WTC11 (cell line): ENCODE measurements at regions of chr1 and their contacts with region 1.

Region 1: DNA sequence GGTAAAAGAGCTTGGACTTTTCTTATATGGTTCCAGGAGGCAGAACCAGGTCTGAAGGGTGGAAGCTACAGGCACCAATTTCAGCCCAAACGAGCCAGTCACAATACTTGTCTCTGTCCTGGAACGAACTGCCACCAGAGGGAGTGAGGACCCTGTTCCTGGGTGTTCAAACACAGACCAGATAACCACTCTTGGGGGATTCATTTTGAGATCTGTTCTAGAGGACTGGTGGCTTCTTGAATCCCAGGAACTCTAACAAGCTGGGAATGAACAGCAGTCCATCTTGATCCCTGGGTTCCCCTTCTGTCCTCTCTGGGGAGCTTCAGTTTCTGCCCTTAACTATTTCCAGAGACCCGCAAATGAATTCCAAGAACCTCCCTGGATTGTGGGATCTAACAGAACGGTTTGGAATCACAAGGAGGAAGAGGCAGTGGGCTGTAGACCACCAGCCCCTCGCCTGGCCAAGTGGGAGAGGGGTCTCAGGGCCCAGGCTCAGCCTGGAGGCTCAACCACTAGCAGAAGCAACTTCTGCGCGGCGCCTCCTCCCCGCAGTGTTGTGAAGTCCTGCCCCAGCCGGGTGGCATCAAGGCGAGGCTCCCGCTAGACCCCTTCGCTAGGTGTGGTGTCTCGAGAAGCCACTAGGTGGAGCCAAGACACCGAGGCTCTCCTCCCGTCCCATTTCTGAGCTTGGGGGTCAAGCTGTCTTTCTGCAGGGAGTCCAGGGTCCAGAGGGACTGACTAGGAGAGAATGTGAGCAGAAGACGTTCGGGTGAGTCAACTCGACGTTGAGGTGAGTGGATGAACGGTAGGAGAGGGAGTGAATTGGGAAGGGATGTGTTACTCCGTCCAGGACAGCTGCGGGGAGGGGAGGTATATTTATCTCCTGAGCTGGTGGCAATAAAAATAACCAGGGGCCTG is 12.1 kb upstream of the NES start:
- DNase-seq: peak; percentile 90
- ATAC-seq: peak; percentile 51
- H3K4me3 Mint-ChIP-seq: peak overlapping the region; percentile 74
- H3K27ac Mint-ChIP-seq: peak overlapping the region; percentile 25; the same call in 1 of the 2 replicates
- H3K4me1 Mint-ChIP-seq: peaks cover 57% of the 10 kb centered on the region
- H3K27me3 Mint-ChIP-seq: peaks cover 7% of the 10 kb centered on the region; the same call in 1 of the 2 replicates
- CTCF ChIP-seq: peak; percentile 87

Region 2: GRCh38 chr1:156581661-156582387 is 107.5 kb before region 1 on chr1:
- CTCF ChIA-PET with region 1: no interaction called
- POLR2A ChIA-PET with region 1: no interaction called
- DNase-seq: no peak
- ATAC-seq: no peak
- H3K4me3 Mint-ChIP-seq: no peak overlapping the region
- H3K27ac Mint-ChIP-seq: no peak overlapping the region
- H3K4me1 Mint-ChIP-seq: peaks cover 20% of the 10 kb centered on the region
- H3K27me3 Mint-ChIP-seq: peaks cover 2% of the 10 kb centered on the region
- CTCF ChIP-seq: no peak

Region 3: DNA sequence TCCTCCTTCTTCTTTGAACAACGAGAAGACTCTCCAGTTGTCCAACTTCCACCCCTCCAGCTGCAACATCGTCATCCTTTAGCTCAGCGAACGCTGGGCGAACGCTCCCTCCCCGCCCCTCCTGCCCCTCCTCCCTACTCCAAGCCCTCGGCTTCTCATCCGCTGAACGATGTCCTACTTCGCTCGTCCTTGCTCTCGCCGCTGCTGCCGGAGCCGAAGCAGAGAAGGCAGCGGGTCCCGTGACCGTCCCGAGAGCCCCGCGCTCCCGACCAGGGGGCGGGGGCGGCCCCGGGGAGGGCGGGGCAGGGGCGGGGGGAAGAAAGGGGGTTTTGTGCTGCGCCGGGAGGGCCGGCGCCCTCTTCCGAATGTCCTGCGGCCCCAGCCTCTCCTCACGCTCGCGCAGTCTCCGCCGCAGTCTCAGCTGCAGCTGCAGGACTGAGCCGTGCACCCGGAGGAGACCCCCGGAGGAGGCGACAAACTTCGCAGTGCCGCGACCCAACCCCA is 47.5 kb before region 1 on chr1 and contains the start of gene BCAN:
- CTCF ChIA-PET with region 1: interaction called, 26 read pairs
- POLR2A ChIA-PET with region 1: no interaction called
- DNase-seq: peak; percentile 73
- ATAC-seq: peak; percentile 70
- H3K4me3 Mint-ChIP-seq: peak within 1 kb of the TSS; percentile 70
- H3K27ac Mint-ChIP-seq: no peak within 1 kb of the TSS
- H3K4me1 Mint-ChIP-seq: peaks cover 29% of the 10 kb centered on the region
- H3K27me3 Mint-ChIP-seq: peaks cover 92% of the 10 kb centered on the region
- CTCF ChIP-seq: no peak
- total RNA-seq, gene BCAN: 2.5 to 3.7 TPM (median 3.6 TPM) in 3 replicates

Region 4: GRCh38 chr1:156705918-156706656 is 16.8 kb after region 1 on chr1:
- CTCF ChIA-PET with region 1: interaction called, 1,553 read pairs
- POLR2A ChIA-PET with region 1: interaction called, 195 read pairs
- DNase-seq: peak; percentile 94
- ATAC-seq: peak; percentile 45
- H3K4me3 Mint-ChIP-seq: peak overlapping the region; percentile 84
- H3K27ac Mint-ChIP-seq: peak overlapping the region; percentile 96
- H3K4me1 Mint-ChIP-seq: peaks cover 62% of the 10 kb centered on the region
- H3K27me3 Mint-ChIP-seq: peaks cover 23% of the 10 kb centered on the region
- CTCF ChIP-seq: peak; percentile 96

Region 5: DNA sequence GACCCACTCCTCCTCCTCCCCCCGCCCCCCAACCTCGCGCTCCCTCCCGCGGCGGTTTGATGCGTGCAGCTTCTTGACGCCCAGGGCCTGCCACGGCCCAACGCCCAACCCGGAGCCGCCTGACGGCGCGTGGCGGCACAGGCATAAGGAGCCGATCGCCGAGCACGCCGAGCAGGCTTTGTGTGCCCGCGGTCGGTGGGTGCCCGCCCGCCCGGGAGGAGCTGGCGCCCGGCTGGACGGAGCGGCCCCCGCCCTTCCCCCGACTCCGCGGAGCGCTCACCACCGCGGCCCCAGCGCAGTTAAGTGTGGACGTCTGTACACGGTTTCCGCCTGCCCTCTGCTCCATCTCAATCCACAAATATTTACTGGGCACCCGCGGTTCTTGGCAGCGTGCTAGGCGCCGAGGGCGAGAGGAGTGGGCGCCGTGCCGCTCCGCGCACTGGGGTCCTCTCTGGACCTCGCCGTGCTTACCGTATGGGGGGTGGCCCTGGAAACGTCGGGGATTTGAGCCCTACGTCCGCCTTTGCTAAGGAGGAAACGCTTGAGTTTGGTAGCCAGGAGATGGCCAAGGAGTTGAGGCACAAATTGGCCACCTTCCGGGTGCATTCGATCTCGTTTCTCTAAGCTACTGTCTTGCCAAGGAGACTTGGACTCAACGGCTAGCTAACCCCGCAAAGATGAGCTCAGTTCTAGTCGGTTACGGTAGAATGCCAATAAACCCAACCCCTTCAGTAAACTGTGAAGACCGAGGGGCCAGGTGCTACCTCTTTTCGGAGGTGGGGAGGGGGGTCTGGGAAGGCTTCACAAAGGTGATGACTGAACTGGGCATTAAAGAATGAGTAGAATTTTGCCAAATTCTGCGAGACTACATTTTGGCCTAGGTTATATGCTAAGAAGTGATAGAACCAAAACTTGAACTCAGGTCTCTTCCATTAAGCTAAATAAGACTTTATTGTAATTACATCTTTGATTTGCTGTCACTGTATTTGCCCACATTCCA is 62.8 kb after region 1 on chr1:
- CTCF ChIA-PET with region 1: interaction called, 38 read pairs
- POLR2A ChIA-PET with region 1: interaction called, 16 read pairs
- DNase-seq: peak; percentile 97
- ATAC-seq: peak; percentile 67
- H3K4me3 Mint-ChIP-seq: peak overlapping the region; percentile 96
- H3K27ac Mint-ChIP-seq: peak overlapping the region; percentile 97
- H3K4me1 Mint-ChIP-seq: peaks cover 43% of the 10 kb centered on the region
- H3K27me3 Mint-ChIP-seq: no peaks in the 10 kb centered on the region
- CTCF ChIP-seq: no peak

Region 6: DNA sequence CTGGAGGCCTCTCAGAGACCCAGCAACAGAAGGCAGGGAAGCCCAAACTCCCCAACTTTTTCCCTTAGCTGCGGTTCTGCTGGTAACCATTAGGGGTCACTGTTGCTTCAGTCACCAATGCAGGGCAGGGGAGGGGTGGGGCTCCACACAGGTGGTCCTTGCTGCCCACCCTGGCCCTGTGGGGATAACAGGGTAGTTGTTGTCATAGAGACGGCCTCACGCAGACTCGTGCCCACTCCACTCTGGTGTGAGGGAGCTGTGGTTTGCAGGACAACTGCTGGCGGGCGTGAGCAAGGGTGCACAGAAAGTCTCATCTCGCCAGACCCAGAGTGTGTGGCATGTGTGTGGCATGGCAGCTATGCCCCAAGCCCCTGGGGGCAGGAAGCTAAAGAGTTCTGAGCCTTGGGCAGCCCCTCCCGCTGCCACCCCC is 149.7 kb after region 1 on chr1:
- CTCF ChIA-PET with region 1: interaction called, 20 read pairs
- POLR2A ChIA-PET with region 1: no interaction called
- DNase-seq: peak; percentile 67
- ATAC-seq: peak; percentile 83
- H3K4me3 Mint-ChIP-seq: no peak overlapping the region
- H3K27ac Mint-ChIP-seq: no peak overlapping the region
- H3K4me1 Mint-ChIP-seq: peaks cover 5% of the 10 kb centered on the region
- H3K27me3 Mint-ChIP-seq: peaks cover 61% of the 10 kb centered on the region
- CTCF ChIP-seq: peak; percentile 87

Region 7: DNA sequence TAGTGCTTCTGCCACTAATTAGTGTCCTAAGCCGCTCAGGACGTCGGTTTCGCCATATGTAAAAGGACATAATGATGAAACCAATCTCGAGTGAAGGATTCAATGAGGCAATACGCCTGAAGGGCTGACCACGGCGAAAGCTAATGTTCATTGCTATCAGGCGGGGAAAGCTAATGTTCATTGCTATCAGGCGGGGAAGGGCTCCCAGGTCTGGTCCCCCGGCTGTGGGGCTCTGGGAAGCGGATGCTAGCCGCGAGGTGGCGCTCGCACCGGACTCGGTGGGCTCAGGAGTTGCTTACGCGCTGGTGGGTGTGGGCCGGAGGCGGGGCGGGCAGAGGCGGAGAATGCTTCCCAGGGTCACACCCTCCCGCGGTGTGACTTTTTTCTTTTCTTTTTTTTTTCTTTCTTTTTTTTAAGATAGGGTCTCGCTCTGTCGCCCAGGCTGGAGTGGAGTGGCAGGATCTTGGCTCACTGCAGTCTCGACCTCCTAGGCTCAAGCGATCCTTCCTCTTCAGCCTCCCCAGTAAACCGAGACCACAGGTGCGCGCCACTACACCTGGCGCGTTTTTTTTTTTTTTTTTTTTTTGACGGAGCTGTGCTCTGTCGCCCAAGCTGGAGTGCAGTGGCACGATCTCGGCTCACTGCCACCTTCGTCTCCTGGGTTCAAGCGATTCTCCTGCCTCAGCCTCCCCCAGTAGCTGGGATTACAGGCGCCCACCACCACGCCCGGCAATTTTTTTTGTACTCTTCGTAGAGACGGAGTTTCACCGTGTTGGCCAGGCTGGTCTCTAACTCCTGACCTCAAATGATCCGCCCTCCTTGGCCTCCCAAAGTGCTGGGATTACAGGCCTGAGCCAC is 203.1 kb after region 1 on chr1:
- CTCF ChIA-PET with region 1: interaction called, 116 read pairs
- POLR2A ChIA-PET with region 1: no interaction called
- DNase-seq: peak; percentile 96
- ATAC-seq: peak; percentile 78
- H3K4me3 Mint-ChIP-seq: peak overlapping the region; percentile 72
- H3K27ac Mint-ChIP-seq: no peak overlapping the region
- H3K4me1 Mint-ChIP-seq: peaks cover 24% of the 10 kb centered on the region
- H3K27me3 Mint-ChIP-seq: peaks cover 76% of the 10 kb centered on the region
- CTCF ChIP-seq: peak; percentile 72

Region 8: DNA sequence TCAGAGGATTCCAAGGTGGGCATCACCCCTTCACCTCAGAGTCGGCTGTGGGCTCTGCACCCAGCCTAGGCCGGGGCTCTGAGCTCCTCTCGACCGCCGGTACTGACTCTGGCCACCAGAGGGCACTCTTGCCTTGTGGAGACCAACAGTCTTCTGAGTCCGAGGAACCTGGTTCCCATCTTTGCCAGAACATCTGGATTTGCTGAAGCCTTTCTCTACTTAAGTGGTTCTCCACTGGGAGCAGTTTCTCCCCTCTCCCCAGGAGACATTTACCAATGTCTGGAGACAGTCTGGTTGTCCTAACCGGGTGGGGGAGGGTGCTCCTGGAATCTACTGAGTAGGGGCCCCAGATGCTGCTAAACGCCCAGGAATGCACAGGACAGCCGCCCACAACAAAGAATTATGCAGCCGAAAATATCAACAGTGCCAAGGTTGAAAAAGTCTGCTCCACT is 400.9 kb after region 1 on chr1:
- CTCF ChIA-PET with region 1: no interaction called
- POLR2A ChIA-PET with region 1: no interaction called
- DNase-seq: peak; percentile 96
- ATAC-seq: peak; percentile 94
- H3K4me3 Mint-ChIP-seq: no peak overlapping the region
- H3K27ac Mint-ChIP-seq: no peak overlapping the region
- H3K4me1 Mint-ChIP-seq: peaks cover 23% of the 10 kb centered on the region
- H3K27me3 Mint-ChIP-seq: no peaks in the 10 kb centered on the region; the same call in 1 of the 2 replicates
- CTCF ChIP-seq: peak; percentile 88